Activated CD8-positive, alpha-beta T cell treated with anti-CD3 and anti-CD28 coated beads for 36 hours (primary cell): ENCODE measurements at regions of chr4 and their contacts with region 1.

Region 1: GRCh38 chr4:174222266-174222872 is 61.1 kb downstream of the FBXO8 start:
- DNase-seq: no peak
- ATAC-seq: peak; percentile 61
- H3K4me3 Mint-ChIP-seq: no peak overlapping the region
- H3K27ac Mint-ChIP-seq: no peak overlapping the region
- H3K4me1 Mint-ChIP-seq: peaks cover 8% of the 10 kb centered on the region
- H3K27me3 Mint-ChIP-seq: peaks cover 47% of the 10 kb centered on the region
- CTCF ChIP-seq: peak; percentile 69

Region 2: GRCh38 chr4:173529477-173530325 is 692.7 kb before region 1 on chr4 and contains the start of gene HAND2:
- CTCF ChIA-PET with region 1: no interaction called
- POLR2A ChIA-PET with region 1: no interaction called
- intact Hi-C with region 1: loop called (anchors 5 kb)
- DNase-seq: no peak
- ATAC-seq: no peak
- H3K4me3 Mint-ChIP-seq: peak within 1 kb of the TSS; percentile 58
- H3K27ac Mint-ChIP-seq: no peak within 1 kb of the TSS
- H3K4me1 Mint-ChIP-seq: peaks cover 15% of the 10 kb centered on the region
- H3K27me3 Mint-ChIP-seq: peaks cover 82% of the 10 kb centered on the region
- CTCF ChIP-seq: no peak
- total RNA-seq, gene HAND2: not detected

Region 3: GRCh38 chr4:174096999-174097398 is 125.4 kb before region 1 on chr4:
- CTCF ChIA-PET with region 1: no interaction called
- POLR2A ChIA-PET with region 1: no interaction called
- intact Hi-C with region 1: no loop called
- DNase-seq: no peak
- ATAC-seq: no peak
- H3K4me3 Mint-ChIP-seq: no peak overlapping the region
- H3K27ac Mint-ChIP-seq: no peak overlapping the region
- H3K4me1 Mint-ChIP-seq: no peaks in the 10 kb centered on the region
- H3K27me3 Mint-ChIP-seq: peaks cover 4% of the 10 kb centered on the region
- CTCF ChIP-seq: no peak

Region 4: DNA sequence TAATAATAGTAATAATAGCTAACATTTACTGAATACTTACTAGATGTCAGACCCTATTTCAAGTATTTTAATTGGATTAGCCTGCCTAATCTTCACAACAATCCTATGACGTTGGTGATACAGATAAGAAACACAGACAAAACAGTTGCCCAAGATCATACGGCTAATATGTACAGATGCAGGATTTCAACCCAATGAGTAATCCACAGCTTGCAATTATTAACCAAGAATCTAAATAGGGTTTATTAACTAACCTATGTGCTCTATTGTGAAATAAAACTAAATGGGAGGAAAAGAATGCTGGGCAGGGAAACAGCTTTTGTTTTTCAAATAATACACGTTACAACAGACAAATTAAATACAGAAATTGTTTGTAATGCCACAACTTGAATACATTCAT is 37.7 kb after region 1 on chr4:
- CTCF ChIA-PET with region 1: no interaction called
- POLR2A ChIA-PET with region 1: no interaction called
- intact Hi-C with region 1: no loop called
- DNase-seq: no peak
- ATAC-seq: no peak
- H3K4me3 Mint-ChIP-seq: no peak overlapping the region
- H3K27ac Mint-ChIP-seq: no peak overlapping the region
- H3K4me1 Mint-ChIP-seq: peaks cover 8% of the 10 kb centered on the region
- H3K27me3 Mint-ChIP-seq: no peaks in the 10 kb centered on the region
- CTCF ChIP-seq: no peak

Region 5: GRCh38 chr4:174318829-174319764 is 96.7 kb after region 1 on chr4:
- CTCF ChIA-PET with region 1: interaction called, 7 read pairs
- POLR2A ChIA-PET with region 1: no interaction called
- intact Hi-C with region 1: loop called (anchors 5 kb)
- DNase-seq: no peak
- ATAC-seq: no peak
- H3K4me3 Mint-ChIP-seq: no peak overlapping the region
- H3K27ac Mint-ChIP-seq: no peak overlapping the region
- H3K4me1 Mint-ChIP-seq: no peaks in the 10 kb centered on the region
- H3K27me3 Mint-ChIP-seq: no peaks in the 10 kb centered on the region
- CTCF ChIP-seq: peak; percentile 82